SK-N-SH (cell line): ENCODE measurements at regions of chrX and their contacts with region 1.

Region 1: DNA sequence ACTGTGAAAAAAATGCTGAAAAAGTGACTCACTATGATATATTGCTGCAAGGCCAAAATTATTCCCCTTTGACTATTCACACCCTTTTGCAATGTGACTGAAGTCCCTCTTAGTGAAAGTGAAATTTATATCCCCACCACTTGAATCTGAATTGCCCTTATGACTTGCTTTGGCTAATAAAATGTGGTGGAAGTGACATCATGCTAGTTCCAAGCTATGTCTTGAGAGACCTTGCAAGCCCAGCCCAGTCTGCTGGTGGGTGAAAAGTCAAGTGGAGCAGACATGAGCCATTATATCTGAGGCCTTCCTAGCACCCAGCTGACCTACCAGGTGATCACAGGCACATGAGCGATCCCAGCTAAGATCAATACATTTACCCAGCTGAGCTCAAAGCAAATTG is 94.7 kb downstream of the LINC00632 start:
- DNase-seq: no peak
- H3K4me3 ChIP-seq: no peak overlapping the region
- H3K27ac ChIP-seq: no peak overlapping the region
- H3K4me1 ChIP-seq: no peaks in the 10 kb centered on the region
- H3K27me3 ChIP-seq: no peaks in the 10 kb centered on the region
- CTCF ChIP-seq: no peak
- EP300 ChIP-seq: no peak
- RAD21 ChIP-seq: no peak

Region 2: GRCh38 chrX:140817942-140818341 is 13.7 kb after region 1 on chrX:
- CTCF ChIA-PET with region 1: interaction called, 13 read pairs
- POLR2A ChIA-PET with region 1: no interaction called
- DNase-seq: peak; percentile 19
- H3K4me3 ChIP-seq: no peak overlapping the region; a peak in 1 of 4 replicates
- H3K27ac ChIP-seq: no peak overlapping the region
- H3K4me1 ChIP-seq: no peaks in the 10 kb centered on the region; a peak in 1 of 4 replicates
- H3K27me3 ChIP-seq: peaks cover 13% of the 10 kb centered on the region; the same call in 1 of the 2 replicates
- CTCF ChIP-seq: peak; percentile 76
- EP300 ChIP-seq: no peak
- RAD21 ChIP-seq: peak; percentile 55